K562 (cell line): ENCODE measurements at regions of chr7 and their contacts with region 1.

Region 1: GRCh38 chr7:100586266-100587025 is at the start of gene FBXO24:
- DNase-seq: peak; percentile 99 to 100 (median 100)
- ATAC-seq: peak; percentile 94
- H3K4me3 ChIP-seq: peak within 1 kb of the TSS; percentile 75
- H3K27ac ChIP-seq: peak within 1 kb of the TSS; percentile 88
- H3K4me1 ChIP-seq: peaks cover 26 to 66% of the 10 kb centered on the region in 2 experiments
- H3K27me3 ChIP-seq: no peaks in the 10 kb centered on the region
- CTCF ChIP-seq: peak in 1 of 3 experiments; percentile 31; a peak in 1 of 6 replicates
- EP300 ChIP-seq: no peak
- POLR2A ChIP-seq: no peak; the same call in none of the 2 replicates
- RAD21 ChIP-seq: no peak
- polyA plus RNA-seq, gene FBXO24: 0.17 to 0.27 TPM

Region 2: DNA sequence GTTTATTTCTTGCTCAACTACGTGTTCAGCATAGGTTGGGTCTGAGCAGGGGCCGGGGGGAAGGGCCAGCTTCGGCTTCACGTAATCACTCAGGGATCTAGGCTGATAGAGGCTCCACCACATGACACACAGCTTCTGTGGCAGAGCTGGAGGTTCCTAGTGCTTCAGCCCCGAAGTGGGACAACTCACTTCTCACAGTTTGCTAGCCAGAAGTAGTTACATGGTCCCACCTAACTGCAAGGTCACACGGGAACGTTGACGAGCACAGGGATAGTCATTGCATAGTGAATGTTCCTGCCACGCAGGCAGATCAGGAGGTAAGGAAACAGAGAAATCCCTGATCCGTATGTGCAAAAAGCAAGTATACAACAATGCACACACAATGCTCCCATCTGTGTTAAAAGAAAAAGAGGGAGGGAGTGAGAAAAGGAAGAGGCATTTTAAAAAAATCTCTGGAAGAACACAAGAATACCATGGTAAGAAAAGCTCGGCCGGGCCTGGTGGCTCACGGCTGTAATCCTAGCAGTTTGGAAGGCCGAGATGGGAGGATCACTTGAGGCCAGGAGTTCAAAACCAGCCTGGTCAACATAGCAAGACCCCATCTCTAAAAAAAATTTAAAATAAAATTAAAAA is 1459.4 kb before region 1 on chr7:
- CTCF ChIA-PET with region 1: no interaction called
- POLR2A ChIA-PET with region 1: no interaction called
- in situ Hi-C with region 1: no loop called
- intact Hi-C with region 1: no loop called
- DNase-seq: peak; percentile 30 to 76 (median 44)
- ATAC-seq: peak; percentile 77
- H3K4me3 ChIP-seq: peak overlapping the region; percentile 7; the same call in 1 of the 2 replicates
- H3K27ac ChIP-seq: peak overlapping the region; percentile 69
- H3K4me1 ChIP-seq: peaks cover 12 to 52% of the 10 kb centered on the region in 2 experiments; a peak in 4 of 5 replicates
- H3K27me3 ChIP-seq: no peaks in the 10 kb centered on the region
- CTCF ChIP-seq: no peak
- EP300 ChIP-seq: peak; percentile 37; the same call in 1 of the 2 replicates
- POLR2A ChIP-seq: no peak
- RAD21 ChIP-seq: no peak; a peak in 1 of 4 replicates

Region 3: DNA sequence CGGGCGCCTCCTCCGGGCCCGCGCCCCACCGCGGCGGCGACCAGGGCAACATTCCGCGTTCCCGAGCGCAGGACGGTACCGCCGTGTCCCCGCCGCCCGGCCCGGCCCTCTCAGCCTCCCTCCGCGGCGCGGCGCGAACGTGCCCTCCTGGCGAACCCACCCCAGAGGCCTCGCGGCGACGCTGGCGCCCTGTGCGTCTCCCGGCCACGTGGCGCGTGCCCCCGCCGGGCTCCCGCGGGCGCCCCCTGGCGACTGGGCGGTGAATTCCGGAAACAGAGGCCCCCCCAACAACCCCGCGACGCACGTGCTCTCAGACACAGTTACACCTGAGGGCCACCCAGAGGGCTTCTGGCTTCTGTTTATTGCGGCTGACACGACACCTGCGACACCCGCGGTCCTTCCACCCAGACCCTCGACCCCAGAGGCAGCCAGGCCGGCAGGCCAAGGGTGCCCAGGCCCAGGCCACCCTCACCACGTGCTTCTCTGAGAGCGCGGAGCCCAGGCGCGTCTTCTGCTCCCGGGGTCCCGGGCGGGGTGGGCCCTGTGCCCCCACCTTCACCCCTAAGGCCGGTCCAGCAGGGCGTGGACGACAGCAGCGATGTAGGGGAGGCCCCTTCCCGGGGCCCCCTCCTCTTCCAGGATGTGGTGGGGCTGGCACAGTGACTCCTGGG is 12.6 kb before region 1 on chr7 and contains the start of gene SAP25:
- CTCF ChIA-PET with region 1: no interaction called
- POLR2A ChIA-PET with region 1: interaction called, 27 read pairs
- in situ Hi-C with region 1: no loop called
- intact Hi-C with region 1: no loop called
- DNase-seq: no peak
- ATAC-seq: no peak
- H3K4me3 ChIP-seq: no peak within 1 kb of the TSS
- H3K27ac ChIP-seq: no peak within 1 kb of the TSS
- H3K4me1 ChIP-seq: peaks cover 2 to 87% of the 10 kb centered on the region in 2 experiments; a peak in 4 of 5 replicates
- H3K27me3 ChIP-seq: no peaks in the 10 kb centered on the region
- CTCF ChIP-seq: no peak
- EP300 ChIP-seq: no peak
- POLR2A ChIP-seq: no peak
- RAD21 ChIP-seq: no peak
- polyA plus RNA-seq, gene SAP25: 0.13 to 0.14 TPM

Region 4: DNA sequence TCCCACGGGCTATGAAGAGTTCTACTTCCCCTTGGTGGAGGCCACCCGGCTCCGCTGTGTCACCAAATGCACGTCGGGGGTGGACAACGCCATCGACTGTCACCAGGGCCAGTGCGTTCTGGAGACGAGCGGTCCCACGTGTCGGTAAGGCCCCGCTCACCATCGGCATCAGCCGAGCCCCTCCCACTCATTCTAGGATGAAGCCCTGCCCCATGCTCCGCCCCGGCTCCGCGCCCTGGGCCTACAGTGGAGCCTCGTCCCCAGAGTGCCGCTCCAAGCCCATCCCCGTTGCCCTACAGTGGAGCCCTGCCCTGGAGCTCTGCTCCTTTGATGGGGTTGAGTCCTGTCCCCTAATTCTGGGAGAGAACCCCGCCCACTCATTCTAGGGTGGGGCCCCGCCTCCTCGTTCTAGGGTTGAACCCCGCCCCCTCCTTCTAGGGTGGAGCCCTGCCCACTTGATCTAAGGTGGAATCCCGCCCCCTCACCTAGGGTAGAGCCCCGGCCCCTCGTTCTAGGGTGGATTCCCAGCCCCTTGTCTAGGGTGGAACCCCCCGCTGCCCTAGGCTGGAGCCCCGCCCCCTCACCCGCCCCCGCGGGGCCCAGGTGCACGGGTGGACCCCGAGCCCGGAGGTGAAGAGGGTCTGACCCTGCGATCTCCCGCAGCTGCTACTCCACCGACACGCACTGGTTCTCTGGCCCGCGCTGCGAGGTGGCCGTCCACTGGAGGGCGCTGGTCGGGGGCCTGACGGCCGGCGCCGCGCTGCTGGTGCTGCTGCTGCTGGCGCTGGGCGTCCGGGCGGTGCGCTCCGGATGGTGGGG is 379.5 kb after region 1 on chr7:
- CTCF ChIA-PET with region 1: no interaction called
- POLR2A ChIA-PET with region 1: no interaction called
- in situ Hi-C with region 1: no loop called
- intact Hi-C with region 1: no loop called
- DNase-seq: peak; percentile 95 to 99 (median 98)
- ATAC-seq: peak; percentile 97
- H3K4me3 ChIP-seq: peak overlapping the region; percentile 43
- H3K27ac ChIP-seq: no peak overlapping the region
- H3K4me1 ChIP-seq: peaks cover 12 to 25% of the 10 kb centered on the region in 2 experiments; a peak in 4 of 5 replicates
- H3K27me3 ChIP-seq: peaks cover 44 to 72% of the 10 kb centered on the region in 2 experiments
- CTCF ChIP-seq: peak; percentile 91 to 98 (median 97)
- EP300 ChIP-seq: peak; percentile 27; the same call in 1 of the 2 replicates
- POLR2A ChIP-seq: no peak
- RAD21 ChIP-seq: peak; percentile 61 to 88